Activated CD8-positive, alpha-beta T cell treated with anti-CD3 and anti-CD28 coated beads for 36 hours (primary cell): ENCODE measurements at regions of chr20 and their contacts with region 1.

Region 1: DNA sequence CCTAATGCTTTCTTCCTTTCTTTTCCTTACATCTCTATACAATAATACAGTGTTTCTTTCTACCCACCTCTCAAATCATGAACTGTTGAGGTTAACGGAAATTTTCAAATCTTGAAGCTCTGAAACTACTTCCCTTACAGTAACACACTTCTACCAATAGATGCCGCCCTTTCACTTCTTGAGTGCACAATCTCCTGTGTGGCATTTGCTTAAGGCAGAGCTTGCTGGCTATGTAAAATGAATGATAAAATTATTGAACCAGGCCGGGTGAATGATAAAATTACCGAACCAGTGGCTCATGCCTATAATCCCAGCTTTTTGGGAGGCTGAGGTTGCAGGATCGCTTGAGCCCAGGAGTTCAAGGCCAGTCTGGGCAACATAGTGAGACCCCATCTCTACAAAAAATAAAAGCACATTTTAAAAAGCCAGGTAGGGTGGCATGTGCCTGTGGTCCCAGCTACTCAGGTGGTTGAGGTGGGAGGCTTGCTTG is 56.8 kb downstream of the KCNS1 start:
- DNase-seq: peak; percentile 56
- ATAC-seq: peak; percentile 88
- H3K4me3 Mint-ChIP-seq: no peak overlapping the region
- H3K27ac Mint-ChIP-seq: peak overlapping the region; percentile 97
- H3K4me1 Mint-ChIP-seq: peaks cover 77% of the 10 kb centered on the region
- H3K27me3 Mint-ChIP-seq: no peaks in the 10 kb centered on the region
- CTCF ChIP-seq: peak; percentile 88

Region 2: GRCh38 chr20:45011108-45011526 is 33.0 kb before region 1 on chr20:
- CTCF ChIA-PET with region 1: interaction called, 10 read pairs
- POLR2A ChIA-PET with region 1: no interaction called
- intact Hi-C with region 1: no loop called
- DNase-seq: peak; percentile 76
- ATAC-seq: peak; percentile 82
- H3K4me3 Mint-ChIP-seq: no peak overlapping the region
- H3K27ac Mint-ChIP-seq: no peak overlapping the region
- H3K4me1 Mint-ChIP-seq: peaks cover 57% of the 10 kb centered on the region
- H3K27me3 Mint-ChIP-seq: no peaks in the 10 kb centered on the region
- CTCF ChIP-seq: peak; percentile 75

Region 3: DNA sequence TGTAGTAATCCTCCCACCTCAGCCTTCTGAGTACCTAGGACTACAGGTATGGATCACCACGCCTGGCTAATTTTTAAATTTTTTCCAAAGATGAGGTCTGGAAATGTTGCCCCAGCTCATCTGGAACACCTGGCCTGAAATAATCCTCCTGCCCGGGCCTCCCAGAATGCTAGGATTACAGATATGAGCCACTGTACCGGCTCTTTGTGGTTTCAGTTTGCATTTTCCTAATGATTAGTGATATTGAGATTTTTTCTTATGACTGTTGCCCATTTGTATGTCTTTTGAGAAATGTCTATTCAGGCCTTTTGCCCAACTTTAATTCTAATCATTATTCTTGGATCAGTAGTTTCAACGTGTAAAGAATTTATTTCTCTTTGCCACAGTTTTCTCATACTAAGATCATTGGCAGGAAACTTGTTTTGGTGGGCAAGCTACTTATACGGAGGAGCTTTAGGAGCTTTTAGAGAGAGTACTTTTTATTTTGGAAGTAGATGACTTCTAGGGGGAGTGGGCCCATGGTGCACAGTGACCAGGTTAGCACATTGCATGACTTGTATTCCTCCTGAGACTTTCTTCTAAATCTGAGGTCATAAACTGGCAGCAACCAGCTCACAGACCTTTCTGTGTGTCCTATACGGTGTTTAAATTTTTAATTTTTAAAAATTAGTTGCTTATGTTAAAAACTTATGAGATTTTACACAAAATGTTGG is 15.5 kb before region 1 on chr20:
- CTCF ChIA-PET with region 1: interaction called, 13 read pairs
- POLR2A ChIA-PET with region 1: interaction called, 3 read pairs
- intact Hi-C with region 1: no loop called
- DNase-seq: no peak
- ATAC-seq: no peak
- H3K4me3 Mint-ChIP-seq: no peak overlapping the region
- H3K27ac Mint-ChIP-seq: peak overlapping the region; percentile 71
- H3K4me1 Mint-ChIP-seq: peaks cover 64% of the 10 kb centered on the region
- H3K27me3 Mint-ChIP-seq: no peaks in the 10 kb centered on the region
- CTCF ChIP-seq: no peak

Region 4: GRCh38 chr20:45070932-45071632 is 27.0 kb after region 1 on chr20:
- CTCF ChIA-PET with region 1: interaction called, 33 read pairs
- POLR2A ChIA-PET with region 1: interaction called, 7 read pairs
- intact Hi-C with region 1: no loop called
- DNase-seq: no peak
- ATAC-seq: no peak
- H3K4me3 Mint-ChIP-seq: no peak overlapping the region
- H3K27ac Mint-ChIP-seq: peak overlapping the region; percentile 56
- H3K4me1 Mint-ChIP-seq: peaks cover 60% of the 10 kb centered on the region
- H3K27me3 Mint-ChIP-seq: no peaks in the 10 kb centered on the region
- CTCF ChIP-seq: no peak

Region 5: GRCh38 chr20:45104786-45105185 is 60.7 kb after region 1 on chr20:
- CTCF ChIA-PET with region 1: interaction called, 24 read pairs
- POLR2A ChIA-PET with region 1: interaction called, 6 read pairs
- intact Hi-C with region 1: loop called (anchors 5 kb)
- DNase-seq: no peak
- ATAC-seq: no peak
- H3K4me3 Mint-ChIP-seq: no peak overlapping the region
- H3K27ac Mint-ChIP-seq: no peak overlapping the region
- H3K4me1 Mint-ChIP-seq: peaks cover 7% of the 10 kb centered on the region
- H3K27me3 Mint-ChIP-seq: peaks cover 25% of the 10 kb centered on the region
- CTCF ChIP-seq: no peak